ENCODE measurements at regions of chr11 and their contacts with region 1.

Region 1: DNA sequence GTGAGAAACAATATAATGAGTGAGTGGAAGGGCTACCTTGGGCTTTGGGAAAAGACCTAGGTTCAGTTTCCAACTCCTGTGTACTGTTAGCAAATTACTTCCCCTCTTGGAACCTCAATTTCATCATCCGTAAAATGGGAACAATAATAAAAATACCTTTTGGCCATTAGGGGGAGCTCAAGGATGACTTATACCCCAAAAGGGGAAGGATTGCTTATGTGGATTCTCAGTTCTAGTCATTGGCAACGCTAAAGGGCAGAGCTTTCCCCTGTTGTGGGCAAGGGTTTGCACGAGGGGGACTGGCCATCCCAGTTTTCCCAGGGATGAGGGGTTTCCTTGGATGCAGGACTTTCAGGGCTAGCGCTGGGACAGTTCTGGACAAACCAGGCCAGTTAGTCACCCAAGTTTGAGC is 3.1 kb upstream of the COMMD9 start:
- DNase-seq: no peak
- H3K4me3 ChIP-seq: no peak overlapping the region
- H3K27ac ChIP-seq: no peak overlapping the region
- H3K4me1 ChIP-seq: peaks cover 23% of the 10 kb centered on the region
- H3K27me3 ChIP-seq: no peaks in the 10 kb centered on the region
- CTCF ChIP-seq: peak; percentile 50

Region 2: GRCh38 chr11:36361901-36362391 is 69.6 kb after region 1 on chr11:
- intact Hi-C with region 1: no loop called
- DNase-seq: no peak
- H3K4me3 ChIP-seq: peak overlapping the region; percentile 27
- H3K27ac ChIP-seq: no peak overlapping the region
- H3K4me1 ChIP-seq: no peaks in the 10 kb centered on the region
- H3K27me3 ChIP-seq: peaks cover 81% of the 10 kb centered on the region
- CTCF ChIP-seq: no peak

Region 3: GRCh38 chr11:36478700-36479329 is 186.5 kb after region 1 on chr11:
- intact Hi-C with region 1: loop called (anchors 10 kb)
- DNase-seq: no peak
- H3K4me3 ChIP-seq: no peak overlapping the region
- H3K27ac ChIP-seq: no peak overlapping the region
- H3K4me1 ChIP-seq: peaks cover 16% of the 10 kb centered on the region
- H3K27me3 ChIP-seq: no peaks in the 10 kb centered on the region
- CTCF ChIP-seq: peak; percentile 71